Caco-2 (cell line): ENCODE measurements at regions of chr1 and their contacts with region 1.

Region 1: GRCh38 chr1:151839457-151840405 is at the start of gene C2CD4D:
- DNase-seq: peak; percentile 76 to 82
- H3K4me3 ChIP-seq: peak within 1 kb of the TSS; percentile 57
- H3K4me3 Mint-ChIP-seq: peak within 1 kb of the TSS; percentile 93
- H3K27ac Mint-ChIP-seq: peak within 1 kb of the TSS; percentile 88
- H3K4me1 ChIP-seq: peaks cover 20% of the 10 kb centered on the region
- H3K4me1 Mint-ChIP-seq: peaks cover 26% of the 10 kb centered on the region
- H3K27me3 ChIP-seq: no peaks in the 10 kb centered on the region
- H3K27me3 Mint-ChIP-seq: no peaks in the 10 kb centered on the region
- CTCF ChIP-seq: no peak
- total RNA-seq, gene C2CD4D: 0.23 and 0.60 TPM in 2 replicates

Region 2: DNA sequence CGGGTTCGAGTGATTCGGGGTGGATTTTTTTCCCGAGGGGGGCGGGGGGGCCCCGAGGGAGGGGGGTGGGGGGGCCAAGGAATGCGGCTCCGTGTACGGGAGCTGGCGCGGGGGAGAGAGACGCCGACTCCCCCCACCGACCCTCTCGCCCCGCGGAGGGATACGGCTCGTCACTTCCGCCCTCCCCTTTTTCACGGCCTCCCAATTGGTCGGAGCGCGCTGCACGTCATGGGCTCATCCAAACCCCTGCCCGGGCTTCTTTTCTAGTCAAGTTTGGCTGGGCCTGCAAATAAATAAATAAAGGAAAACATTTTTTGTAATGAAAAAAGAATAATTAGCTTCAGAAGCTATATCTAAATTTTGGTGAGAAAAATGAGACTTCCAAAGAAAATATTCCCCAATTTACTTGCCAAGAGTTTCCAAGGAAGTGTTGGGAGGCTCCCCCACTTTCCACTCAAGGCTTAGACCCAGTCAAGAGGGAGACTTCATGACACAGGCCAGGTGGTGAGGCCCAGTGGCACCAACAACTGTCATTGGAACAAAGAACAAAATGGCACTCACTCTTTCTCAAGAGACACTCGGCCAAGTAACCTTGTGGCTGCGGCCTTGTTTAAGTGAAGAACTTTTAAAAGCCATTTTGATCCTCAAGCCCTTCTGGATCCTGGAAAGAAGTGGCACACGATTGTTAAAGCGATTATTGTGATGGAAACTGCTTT is 380.2 kb before region 1 on chr1 and contains the start of gene POGZ:
- CTCF ChIA-PET with region 1: no interaction called
- POLR2A ChIA-PET with region 1: no interaction called
- intact Hi-C with region 1: loop called (anchors 5 kb)
- DNase-seq: peak; percentile 95 to 97
- H3K4me3 ChIP-seq: peak within 1 kb of the TSS; percentile 77
- H3K4me3 Mint-ChIP-seq: peak within 1 kb of the TSS; percentile 80
- H3K27ac Mint-ChIP-seq: peak within 1 kb of the TSS; percentile 83
- H3K4me1 ChIP-seq: peaks cover 17% of the 10 kb centered on the region
- H3K4me1 Mint-ChIP-seq: peaks cover 7% of the 10 kb centered on the region
- H3K27me3 ChIP-seq: no peaks in the 10 kb centered on the region
- H3K27me3 Mint-ChIP-seq: no peaks in the 10 kb centered on the region
- CTCF ChIP-seq: no peak
- total RNA-seq, gene POGZ: 80.0 and 83.0 TPM in 2 replicates

Region 3: DNA sequence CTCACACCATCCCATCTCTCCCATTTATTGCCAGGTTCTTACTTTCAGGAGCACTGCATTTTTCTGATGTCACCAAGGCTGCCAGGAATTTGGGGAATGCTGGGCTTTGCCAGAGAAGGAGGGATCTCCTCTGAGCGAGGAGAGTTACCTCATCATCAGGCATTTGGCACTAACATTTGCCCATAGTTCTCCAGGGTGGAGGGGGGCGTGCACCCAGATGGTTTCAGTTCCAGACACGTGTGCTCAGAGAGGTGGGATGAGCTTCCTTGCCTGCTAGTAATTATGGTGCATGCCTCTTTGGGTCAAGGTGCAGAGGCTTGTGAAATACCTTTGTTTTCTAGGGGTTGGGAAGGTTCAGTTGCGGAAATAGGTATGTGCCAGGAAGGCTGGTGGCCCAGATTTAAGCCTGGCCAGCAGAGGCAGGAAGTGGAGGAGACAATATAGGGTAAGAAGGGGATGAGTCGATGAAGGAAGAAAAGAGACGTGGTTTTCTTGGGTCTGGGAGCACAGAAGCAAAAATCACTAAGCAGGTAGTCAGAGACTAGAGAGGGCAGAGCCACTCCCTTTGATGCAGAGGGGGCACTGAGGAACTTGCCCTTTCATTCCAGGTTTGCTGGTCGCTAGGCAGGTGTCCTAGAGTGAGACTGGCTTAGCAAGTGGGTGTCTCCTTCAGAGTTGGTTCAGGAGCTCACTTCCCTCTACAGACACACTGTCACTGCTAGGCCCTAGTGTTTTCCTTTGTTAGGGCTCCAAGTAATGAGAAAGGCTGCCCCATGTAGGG is 292.4 kb before region 1 on chr1:
- CTCF ChIA-PET with region 1: no interaction called
- POLR2A ChIA-PET with region 1: interaction called, 3 read pairs
- intact Hi-C with region 1: loop called (anchors 5 kb)
- DNase-seq: peak; percentile 92 to 96
- H3K4me3 ChIP-seq: no peak overlapping the region
- H3K4me3 Mint-ChIP-seq: peak overlapping the region; percentile 64
- H3K27ac Mint-ChIP-seq: peak overlapping the region; percentile 89
- H3K4me1 ChIP-seq: peaks cover 65% of the 10 kb centered on the region
- H3K4me1 Mint-ChIP-seq: peaks cover 62% of the 10 kb centered on the region
- H3K27me3 ChIP-seq: no peaks in the 10 kb centered on the region
- H3K27me3 Mint-ChIP-seq: no peaks in the 10 kb centered on the region
- CTCF ChIP-seq: no peak

Region 4: GRCh38 chr1:151680812-151681211 is 158.9 kb before region 1 on chr1:
- CTCF ChIA-PET with region 1: no interaction called
- POLR2A ChIA-PET with region 1: no interaction called
- intact Hi-C with region 1: no loop called
- DNase-seq: no peak
- H3K4me3 ChIP-seq: no peak overlapping the region
- H3K4me3 Mint-ChIP-seq: no peak overlapping the region
- H3K27ac Mint-ChIP-seq: no peak overlapping the region
- H3K4me1 ChIP-seq: no peaks in the 10 kb centered on the region
- H3K4me1 Mint-ChIP-seq: no peaks in the 10 kb centered on the region
- H3K27me3 ChIP-seq: no peaks in the 10 kb centered on the region
- H3K27me3 Mint-ChIP-seq: no peaks in the 10 kb centered on the region
- CTCF ChIP-seq: no peak

Region 5: GRCh38 chr1:151693076-151693651 is 146.6 kb before region 1 on chr1:
- CTCF ChIA-PET with region 1: interaction called, 7 read pairs
- POLR2A ChIA-PET with region 1: no interaction called
- intact Hi-C with region 1: loop called (anchors 1 kb)
- DNase-seq: peak in 1 of 2 experiments; percentile 54
- H3K4me3 ChIP-seq: no peak overlapping the region
- H3K4me3 Mint-ChIP-seq: no peak overlapping the region
- H3K27ac Mint-ChIP-seq: no peak overlapping the region
- H3K4me1 ChIP-seq: no peaks in the 10 kb centered on the region
- H3K4me1 Mint-ChIP-seq: no peaks in the 10 kb centered on the region
- H3K27me3 ChIP-seq: no peaks in the 10 kb centered on the region
- H3K27me3 Mint-ChIP-seq: no peaks in the 10 kb centered on the region
- CTCF ChIP-seq: peak; percentile 60 to 90

Region 6: GRCh38 chr1:151739590-151740375 is 99.9 kb before region 1 on chr1:
- CTCF ChIA-PET with region 1: interaction called, 10 read pairs
- POLR2A ChIA-PET with region 1: no interaction called
- intact Hi-C with region 1: loop called (anchors 2 kb)
- DNase-seq: peak in 1 of 2 experiments; percentile 63
- H3K4me3 ChIP-seq: no peak overlapping the region
- H3K4me3 Mint-ChIP-seq: no peak overlapping the region
- H3K27ac Mint-ChIP-seq: no peak overlapping the region
- H3K4me1 ChIP-seq: 0 out of 2 replicates have a peak, but pooled peaks cover 7% of the 10 kb centered on the region
- H3K4me1 Mint-ChIP-seq: peaks cover 12% of the 10 kb centered on the region
- H3K27me3 ChIP-seq: no peaks in the 10 kb centered on the region
- H3K27me3 Mint-ChIP-seq: peaks cover 3% of the 10 kb centered on the region
- CTCF ChIP-seq: peak in 1 of 2 experiments; percentile 5

Region 7: DNA sequence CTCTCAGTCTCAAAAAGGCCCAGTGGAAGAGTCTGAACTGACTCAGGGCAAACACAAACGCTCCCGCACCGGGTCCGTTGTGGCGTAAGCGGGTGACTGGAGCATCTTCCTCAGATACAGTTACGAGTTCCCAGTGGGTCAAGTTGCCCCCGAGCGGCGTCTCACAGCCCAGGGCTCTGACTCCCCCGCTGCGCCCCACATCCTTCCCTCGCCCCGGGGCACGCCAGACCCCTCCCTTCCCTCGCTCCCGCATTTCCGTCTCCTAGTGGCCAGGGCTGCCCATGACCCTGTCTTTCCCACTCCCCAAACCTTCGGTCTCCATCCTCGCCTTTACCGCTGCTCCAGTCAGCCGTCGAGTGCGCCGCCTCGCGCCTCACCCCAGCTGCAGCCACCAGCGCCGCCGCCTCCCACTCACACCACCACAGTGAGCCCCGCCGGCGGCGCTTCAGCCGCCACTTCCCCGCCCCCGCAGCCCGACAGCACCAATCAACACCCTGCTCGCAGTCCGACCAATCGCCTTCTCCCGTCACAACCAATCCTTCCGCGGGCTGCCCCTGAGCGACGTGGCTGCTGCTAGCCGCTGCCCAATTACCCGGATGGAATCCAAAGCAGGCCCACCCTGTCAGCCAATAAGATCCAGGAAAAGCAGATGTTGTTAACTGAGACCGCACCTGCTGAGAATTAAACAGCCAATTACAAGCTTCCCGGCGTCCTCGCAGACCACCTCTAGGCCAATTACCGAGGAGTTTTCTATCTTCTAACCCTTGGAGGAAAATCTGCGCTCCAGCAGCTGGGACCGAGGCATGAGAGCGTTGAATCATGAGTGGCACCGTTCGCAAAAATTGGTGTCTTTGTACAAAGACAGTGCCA is 49.4 kb before region 1 on chr1 and contains the start of gene TDRKH:
- CTCF ChIA-PET with region 1: no interaction called
- POLR2A ChIA-PET with region 1: interaction called, 6 read pairs
- intact Hi-C with region 1: loop called (anchors 5 kb)
- DNase-seq: peak; percentile 99
- H3K4me3 ChIP-seq: peak within 1 kb of the TSS; percentile 76
- H3K4me3 Mint-ChIP-seq: peak within 1 kb of the TSS; percentile 88
- H3K27ac Mint-ChIP-seq: peak within 1 kb of the TSS; percentile 57
- H3K4me1 ChIP-seq: no peaks in the 10 kb centered on the region
- H3K4me1 Mint-ChIP-seq: no peaks in the 10 kb centered on the region
- H3K27me3 ChIP-seq: no peaks in the 10 kb centered on the region
- H3K27me3 Mint-ChIP-seq: no peaks in the 10 kb centered on the region
- CTCF ChIP-seq: peak; percentile 20 to 41
- total RNA-seq, gene TDRKH: 12.6 and 15.0 TPM in 2 replicates